CD8-positive, alpha-beta memory T cell (primary cell): ENCODE measurements at regions of chr16 and their contacts with region 1.

Region 1: GRCh38 chr16:28984619-28985135 is at the start of gene LAT:
- DNase-seq: peak; percentile 69 to 87 (median 78)
- H3K4me3 ChIP-seq: peak within 1 kb of the TSS; percentile 88
- H3K4me3 Mint-ChIP-seq: peak within 1 kb of the TSS; percentile 94 to 99 (median 99)
- H3K27ac ChIP-seq: peak within 1 kb of the TSS; percentile 72
- H3K27ac Mint-ChIP-seq: peak within 1 kb of the TSS; percentile 91 to 99 (median 96)
- H3K4me1 ChIP-seq: peaks cover 42% of the 10 kb centered on the region
- H3K4me1 Mint-ChIP-seq: peaks cover 35 to 62% (median 43%) of the 10 kb centered on the region in 3 donors
- H3K27me3 ChIP-seq: no peaks in the 10 kb centered on the region
- H3K27me3 Mint-ChIP-seq: no peaks in the 10 kb centered on the region
- total RNA-seq, gene LAT: 195 to 203 TPM

Region 2: GRCh38 chr16:28958836-28959235 is 25.8 kb before region 1 on chr16:
- CTCF ChIA-PET with region 1: no interaction called
- POLR2A ChIA-PET with region 1: no interaction called
- DNase-seq: no peak
- H3K4me3 ChIP-seq: no peak overlapping the region
- H3K4me3 Mint-ChIP-seq: no peak overlapping the region
- H3K27ac ChIP-seq: no peak overlapping the region
- H3K27ac Mint-ChIP-seq: peak overlapping the region in 1 of 8 donors; percentile 12
- H3K4me1 ChIP-seq: no peaks in the 10 kb centered on the region
- H3K4me1 Mint-ChIP-seq: peaks cover 5 to 15% (median 10%) of the 10 kb centered on the region in 3 donors
- H3K27me3 ChIP-seq: no peaks in the 10 kb centered on the region
- H3K27me3 Mint-ChIP-seq: no peaks in the 10 kb centered on the region

Region 3: DNA sequence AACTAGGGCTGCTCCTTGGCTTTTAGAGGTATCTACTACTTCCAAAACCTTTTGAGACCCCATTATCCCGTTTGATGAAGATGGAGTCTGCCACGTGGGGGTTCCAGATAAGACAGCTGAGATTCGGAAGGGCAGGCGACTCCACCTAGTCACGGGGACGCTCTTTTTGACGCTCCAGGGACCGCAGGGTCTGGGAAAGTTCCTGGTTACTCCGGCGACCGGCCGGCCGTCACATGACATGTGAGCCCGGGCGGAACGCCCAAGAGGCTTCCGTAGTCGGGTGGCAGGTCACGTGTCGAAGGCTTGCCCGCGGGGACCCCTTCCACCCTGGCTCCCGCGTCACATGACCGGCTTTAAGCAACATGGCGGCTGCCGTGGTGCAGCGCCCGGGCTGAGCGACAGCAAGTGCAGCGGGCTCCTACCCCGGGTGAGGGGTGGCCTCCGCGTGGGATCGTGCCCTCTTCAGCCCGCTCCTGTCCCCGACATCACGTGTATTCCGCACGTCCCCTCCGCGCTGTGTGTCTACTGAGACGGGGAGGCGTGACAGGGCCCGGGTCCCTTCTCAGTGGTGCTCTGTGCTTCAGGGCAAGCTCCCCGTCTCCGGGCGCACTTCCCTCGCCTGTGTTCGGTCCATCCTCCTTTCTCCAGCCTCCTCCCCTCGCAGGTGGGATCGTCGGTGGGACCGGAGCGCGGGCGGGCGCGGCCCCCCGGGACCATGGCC is 10.1 kb before region 1 on chr16 and contains the start of gene SPNS1:
- CTCF ChIA-PET with region 1: interaction called, 41 read pairs
- POLR2A ChIA-PET with region 1: interaction called, 20 read pairs
- DNase-seq: peak; percentile 84 to 93 (median 91)
- H3K4me3 ChIP-seq: peak within 1 kb of the TSS; percentile 76
- H3K4me3 Mint-ChIP-seq: peak within 1 kb of the TSS; percentile 92 to 99 (median 97)
- H3K27ac ChIP-seq: peak within 1 kb of the TSS; percentile 70
- H3K27ac Mint-ChIP-seq: peak within 1 kb of the TSS; percentile 76 to 99 (median 97)
- H3K4me1 ChIP-seq: peaks cover 34% of the 10 kb centered on the region
- H3K4me1 Mint-ChIP-seq: peaks cover 30 to 43% (median 33%) of the 10 kb centered on the region in 3 donors
- H3K27me3 ChIP-seq: no peaks in the 10 kb centered on the region
- H3K27me3 Mint-ChIP-seq: peaks cover 0 to 4% of the 10 kb centered on the region in 2 donors
- total RNA-seq, gene SPNS1: 36.5 to 40.9 TPM

Region 4: DNA sequence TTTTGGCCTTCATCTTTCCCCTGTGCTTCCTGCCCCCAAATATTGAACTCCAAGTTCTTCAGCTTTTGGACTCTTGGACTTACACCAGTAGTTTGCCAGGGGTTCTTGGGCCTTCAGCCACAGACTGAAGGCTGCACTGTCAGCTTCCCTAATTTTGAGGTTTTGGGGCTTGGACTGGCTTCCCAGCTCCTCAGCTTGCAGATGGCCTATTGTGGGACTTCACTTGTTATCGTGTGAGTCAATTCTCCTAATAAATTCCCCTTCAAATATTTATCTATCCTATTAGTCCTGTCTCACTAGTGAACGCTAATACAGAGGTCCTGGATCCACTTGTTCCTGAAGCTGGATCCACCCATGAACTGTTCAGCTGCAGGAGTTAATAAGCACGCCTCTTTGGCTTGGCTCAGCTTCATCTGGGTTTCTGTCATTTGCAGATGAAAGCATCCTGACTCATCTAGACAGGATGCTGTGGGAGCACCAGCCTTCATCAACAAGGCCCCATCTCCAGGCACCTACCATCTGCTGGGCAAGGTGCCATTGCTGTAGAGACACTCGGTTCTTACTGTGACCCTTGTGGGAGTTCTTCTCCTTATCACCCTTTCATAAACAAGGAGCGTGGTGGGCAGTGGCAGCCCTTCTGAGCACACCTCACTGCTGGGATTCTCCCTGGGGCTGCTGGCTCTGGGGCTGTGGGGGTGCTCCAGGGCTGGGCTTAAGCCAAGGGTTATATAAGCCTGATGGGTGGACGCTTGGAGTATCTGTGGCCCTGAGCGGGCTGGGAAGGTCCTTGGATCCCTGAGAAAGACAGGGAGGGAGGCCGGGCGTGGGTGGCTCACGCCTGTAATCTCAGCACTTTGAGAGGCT is 23.3 kb after region 1 on chr16:
- CTCF ChIA-PET with region 1: interaction called, 5 read pairs
- POLR2A ChIA-PET with region 1: interaction called, 17 read pairs
- DNase-seq: peak in 3 of 5 donors; percentile 55 to 85 (median 66)
- H3K4me3 ChIP-seq: peak overlapping the region; percentile 25
- H3K4me3 Mint-ChIP-seq: peak overlapping the region in 6 of 7 donors; percentile 49 to 80 (median 64)
- H3K27ac ChIP-seq: peak overlapping the region; percentile 74
- H3K27ac Mint-ChIP-seq: peak overlapping the region; percentile 64 to 95 (median 89)
- H3K4me1 ChIP-seq: peaks cover 50% of the 10 kb centered on the region
- H3K4me1 Mint-ChIP-seq: peaks cover 36 to 52% (median 51%) of the 10 kb centered on the region in 3 donors
- H3K27me3 ChIP-seq: no peaks in the 10 kb centered on the region
- H3K27me3 Mint-ChIP-seq: no peaks in the 10 kb centered on the region